ENCODE measurements at regions of chr3 and their contacts with region 1.

Region 1: DNA sequence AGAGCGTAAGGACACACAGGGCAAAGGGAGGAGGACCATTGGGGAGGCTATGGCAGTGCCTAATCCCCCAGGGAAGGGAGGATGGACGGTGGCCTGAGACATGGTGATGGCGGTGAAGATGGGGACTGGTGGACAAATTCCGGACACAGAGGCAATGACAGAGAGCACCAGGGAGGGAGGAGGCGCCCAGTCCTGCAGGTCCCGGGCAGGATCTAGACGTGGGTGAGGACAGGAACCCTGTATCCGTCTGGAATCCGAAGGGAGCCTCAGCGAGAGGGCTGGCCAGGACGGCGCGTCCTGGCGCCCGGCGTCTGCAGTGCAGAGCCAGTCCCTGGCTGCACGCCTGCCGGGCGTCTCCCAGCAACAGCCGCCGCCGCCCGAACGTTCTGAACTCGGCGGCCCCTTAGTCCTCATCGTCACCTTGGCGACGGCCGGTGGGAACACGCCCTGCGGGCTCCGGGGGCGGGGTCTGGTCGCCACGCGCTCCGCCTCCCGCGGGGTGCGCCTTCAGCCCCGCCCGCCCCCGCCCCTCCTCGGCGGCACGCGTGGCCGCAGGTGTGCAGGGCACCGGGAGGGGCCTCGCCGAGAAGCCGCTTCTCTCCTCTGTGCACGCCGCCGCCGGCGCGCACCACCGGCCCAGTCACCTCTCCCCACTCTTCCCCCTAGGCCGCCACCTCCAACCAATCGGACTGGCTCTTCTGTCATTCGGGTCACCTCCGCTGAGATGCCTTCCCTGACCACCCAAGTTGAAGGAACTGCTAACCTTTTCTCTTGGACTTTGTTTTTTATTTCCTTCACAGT is 11.6 kb downstream of the XIRP1 start:
- DNase-seq: peak; percentile 83

Region 2: DNA sequence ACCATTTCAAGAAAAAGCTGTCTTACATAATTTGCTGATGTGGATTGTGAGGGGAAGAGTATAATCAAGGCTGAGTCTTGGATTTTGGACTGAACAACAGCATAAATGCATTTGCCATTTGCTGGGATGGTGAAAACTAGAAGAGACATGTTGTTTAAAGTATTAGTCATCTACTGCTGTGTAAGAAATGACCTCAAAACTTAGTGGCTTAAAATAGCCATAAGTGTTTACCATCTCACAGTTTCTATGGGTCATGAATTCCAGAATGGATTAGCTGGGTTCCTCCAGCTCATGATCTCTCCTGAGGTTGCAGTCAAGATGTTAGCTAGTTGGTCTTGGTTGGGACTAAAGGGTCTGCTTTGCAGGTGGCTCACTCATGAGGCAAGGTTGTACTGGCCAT is 195.2 kb before region 1 on chr3:
- in situ Hi-C with region 1: no loop called
- DNase-seq: no peak

Region 3: GRCh38 chr3:39383045-39383880 is 202.5 kb after region 1 on chr3 and contains the start of gene SLC25A38:
- in situ Hi-C with region 1: loop called (anchors 25 kb)
- DNase-seq: peak; percentile 92

Region 4: GRCh38 chr3:39644176-39644575 is 463.4 kb after region 1 on chr3:
- in situ Hi-C with region 1: no loop called
- DNase-seq: no peak

Measured in KBM-7 (cell line).